Aorta (tissue), 5 donors: ENCODE measurements at regions of chr2 and their contacts with region 1.

Region 1: DNA sequence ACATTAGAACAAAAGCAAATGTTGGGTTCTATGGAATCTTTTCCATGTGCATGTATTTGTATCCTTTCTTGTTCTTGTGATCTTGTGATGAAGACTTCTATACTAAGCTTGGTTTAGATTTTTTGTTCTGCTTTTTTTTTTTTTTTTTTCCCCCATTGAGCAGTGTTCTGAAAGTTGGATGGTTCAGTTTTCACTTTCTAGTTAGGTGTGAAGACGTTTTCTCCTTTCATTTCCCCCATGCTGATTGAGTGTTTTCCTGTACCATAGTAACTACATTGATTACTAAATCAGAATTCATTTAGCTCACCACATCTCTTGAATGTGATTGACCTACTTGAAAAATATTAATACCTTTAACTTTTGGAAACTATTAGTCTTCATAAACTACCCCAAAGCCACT is 34.1 kb downstream of the NOP58 start:
- DNase-seq: no peak
- ATAC-seq: no peak
- H3K4me3 ChIP-seq: no peak overlapping the region
- H3K27ac ChIP-seq: no peak overlapping the region
- H3K4me1 ChIP-seq: no peaks in the 10 kb centered on the region
- H3K27me3 ChIP-seq: no peaks in the 10 kb centered on the region

Region 2: GRCh38 chr2:202555356-202555755 is 255.6 kb after region 1 on chr2:
- intact Hi-C with region 1: loop called in 1 of 2 experiments (anchors 10 kb)
- DNase-seq: no peak
- ATAC-seq: no peak
- H3K4me3 ChIP-seq: no peak overlapping the region
- H3K27ac ChIP-seq: no peak overlapping the region
- H3K4me1 ChIP-seq: no peaks in the 10 kb centered on the region
- H3K27me3 ChIP-seq: no peaks in the 10 kb centered on the region